CD4-positive, alpha-beta memory T cell (primary cell): ENCODE measurements at regions of chr9 and their contacts with region 1.

Region 1: DNA sequence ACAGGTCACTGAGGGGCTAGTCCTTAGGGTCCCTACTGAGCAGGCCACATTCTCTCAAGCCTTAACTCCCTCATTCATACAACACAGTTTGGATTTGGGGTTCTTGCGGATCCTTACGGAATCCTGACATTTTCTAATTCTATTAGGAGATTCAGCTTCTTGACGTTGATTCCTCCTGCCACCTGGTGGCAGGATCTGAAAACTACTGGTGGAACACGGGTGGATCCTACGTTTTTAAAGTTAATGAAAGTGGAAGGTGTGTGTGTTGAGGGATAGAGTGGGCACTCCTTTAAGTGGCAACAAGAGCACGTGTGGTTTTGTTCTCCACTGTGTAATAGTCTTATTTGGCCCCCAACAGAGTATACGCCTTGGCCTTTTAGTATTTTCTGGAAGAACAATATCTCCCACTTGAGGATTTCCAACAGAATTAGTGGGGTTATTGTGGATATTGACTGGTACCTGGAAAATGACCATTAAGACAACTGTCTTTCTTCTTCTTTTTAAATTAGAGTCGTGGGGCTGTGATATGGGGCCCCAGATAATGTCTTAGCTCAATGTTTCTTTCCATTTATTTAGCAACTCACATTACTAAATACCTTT is 25.2 kb downstream of the SLC28A3 start:
- DNase-seq: peak in 4 of 5 donors; percentile 36 to 48 (median 44)
- H3K4me3 ChIP-seq: no peak overlapping the region
- H3K4me3 Mint-ChIP-seq: peak overlapping the region in 1 of 8 donors; percentile 26
- H3K27ac ChIP-seq: no peak overlapping the region
- H3K27ac Mint-ChIP-seq: peak overlapping the region in 1 of 7 donors; percentile 31
- H3K4me1 ChIP-seq: peaks cover 4% of the 10 kb centered on the region
- H3K4me1 Mint-ChIP-seq: peaks cover 0 to 2% (median 0%) of the 10 kb centered on the region in 4 donors
- H3K27me3 ChIP-seq: no peaks in the 10 kb centered on the region
- H3K27me3 Mint-ChIP-seq: no peaks in the 10 kb centered on the region

Region 2: GRCh38 chr9:83920927-83921707 is 394.3 kb before region 1 on chr9 and contains the start of gene KIF27:
- CTCF ChIA-PET with region 1: no interaction called
- POLR2A ChIA-PET with region 1: interaction called, 3 read pairs
- intact Hi-C with region 1: loop called (anchors 5 kb)
- DNase-seq: peak; percentile 93 to 95 (median 94)
- H3K4me3 ChIP-seq: peak within 1 kb of the TSS; percentile 20 to 67
- H3K4me3 Mint-ChIP-seq: peak within 1 kb of the TSS; percentile 90 to 95 (median 92)
- H3K27ac ChIP-seq: peak within 1 kb of the TSS; percentile 83
- H3K27ac Mint-ChIP-seq: peak within 1 kb of the TSS; percentile 84 to 98 (median 97)
- H3K4me1 ChIP-seq: peaks cover 11% of the 10 kb centered on the region
- H3K4me1 Mint-ChIP-seq: peaks cover 8 to 18% (median 10%) of the 10 kb centered on the region in 4 donors
- H3K27me3 ChIP-seq: no peaks in the 10 kb centered on the region
- H3K27me3 Mint-ChIP-seq: no peaks in the 10 kb centered on the region
- total RNA-seq, gene KIF27: 4.7 to 5.2 TPM

Region 3: GRCh38 chr9:84079994-84080393 is 235.4 kb before region 1 on chr9:
- CTCF ChIA-PET with region 1: no interaction called
- POLR2A ChIA-PET with region 1: no interaction called
- intact Hi-C with region 1: loop called (anchors 10 kb)
- DNase-seq: no peak
- H3K4me3 ChIP-seq: no peak overlapping the region
- H3K4me3 Mint-ChIP-seq: no peak overlapping the region
- H3K27ac ChIP-seq: no peak overlapping the region
- H3K27ac Mint-ChIP-seq: no peak overlapping the region
- H3K4me1 ChIP-seq: no peaks in the 10 kb centered on the region
- H3K4me1 Mint-ChIP-seq: no peaks in the 10 kb centered on the region
- H3K27me3 ChIP-seq: no peaks in the 10 kb centered on the region
- H3K27me3 Mint-ChIP-seq: peaks cover 6 to 11% of the 10 kb centered on the region in 2 donors

Region 4: GRCh38 chr9:84261082-84261746 is 54.2 kb before region 1 on chr9:
- CTCF ChIA-PET with region 1: interaction called, 15 read pairs
- POLR2A ChIA-PET with region 1: no interaction called
- intact Hi-C with region 1: loop called (anchors 1 kb)
- DNase-seq: peak in 4 of 5 donors; percentile 25 to 45 (median 33)
- H3K4me3 ChIP-seq: no peak overlapping the region
- H3K4me3 Mint-ChIP-seq: peak overlapping the region in 6 of 8 donors; percentile 41 to 68 (median 55)
- H3K27ac ChIP-seq: no peak overlapping the region
- H3K27ac Mint-ChIP-seq: peak overlapping the region in 1 of 7 donors; percentile 7
- H3K4me1 ChIP-seq: peaks cover 3% of the 10 kb centered on the region
- H3K4me1 Mint-ChIP-seq: peaks cover 4 to 8% (median 4%) of the 10 kb centered on the region in 4 donors
- H3K27me3 ChIP-seq: no peaks in the 10 kb centered on the region
- H3K27me3 Mint-ChIP-seq: peaks cover 2 to 7% of the 10 kb centered on the region in 2 donors

Region 5: DNA sequence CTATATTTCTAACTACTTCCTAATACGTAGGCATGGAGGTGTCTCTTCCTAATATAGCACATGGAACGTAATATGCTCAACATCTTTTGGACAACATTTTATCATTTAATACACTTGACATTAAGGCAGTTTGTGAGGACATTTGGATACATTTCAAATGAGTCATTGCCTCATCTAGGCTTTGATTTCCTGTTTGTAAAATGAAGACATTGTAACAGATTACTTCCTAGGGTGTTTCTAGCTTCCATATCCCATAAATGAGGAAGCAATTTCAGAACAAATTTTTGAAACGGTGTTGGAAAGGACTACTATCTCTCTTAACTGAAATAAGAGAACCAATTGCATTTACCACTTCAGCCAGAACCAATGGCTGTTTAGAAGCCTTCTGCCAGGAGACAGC is 13.5 kb before region 1 on chr9:
- CTCF ChIA-PET with region 1: interaction called, 25 read pairs
- POLR2A ChIA-PET with region 1: no interaction called
- intact Hi-C with region 1: no loop called
- DNase-seq: no peak
- H3K4me3 ChIP-seq: no peak overlapping the region
- H3K4me3 Mint-ChIP-seq: no peak overlapping the region
- H3K27ac ChIP-seq: no peak overlapping the region
- H3K27ac Mint-ChIP-seq: no peak overlapping the region
- H3K4me1 ChIP-seq: peaks cover 2% of the 10 kb centered on the region
- H3K4me1 Mint-ChIP-seq: peaks cover 1 to 13% (median 3%) of the 10 kb centered on the region in 4 donors
- H3K27me3 ChIP-seq: no peaks in the 10 kb centered on the region
- H3K27me3 Mint-ChIP-seq: no peaks in the 10 kb centered on the region